Heart left ventricle (tissue), 16 donors: ENCODE measurements at regions of chr1 and their contacts with region 1.

Region 1: GRCh38 chr1:154870115-154870571 is at the start of gene KCNN3:
- DNase-seq: peak; percentile 92 to 95 (median 94)
- ATAC-seq: peak; percentile 97 to 99 (median 98)
- H3K4me3 ChIP-seq: peak within 1 kb of the TSS; percentile 27 to 73 (median 57)
- H3K27ac ChIP-seq: peak within 1 kb of the TSS in 8 of 12 donors; percentile 27 to 65 (median 42)
- H3K4me1 ChIP-seq: peaks cover 0 to 47% (median 32%) of the 10 kb centered on the region in 12 donors
- H3K27me3 ChIP-seq: peaks cover 0 to 11% (median 0%) of the 10 kb centered on the region in 9 donors
- CTCF ChIP-seq: peak in 1 of 12 donors; percentile 5
- POLR2A ChIP-seq: peak in 1 of 2 donors; percentile 88
- total RNA-seq, gene KCNN3: 1.0 to 4.6 (median 3.0) TPM

Region 2: GRCh38 chr1:154760469-154760933 is 109.6 kb before region 1 on chr1:
- intact Hi-C with region 1: loop called in 5 of 10 experiments (anchors 5 kb)
- DNase-seq: peak; percentile 43 to 88 (median 58)
- ATAC-seq: peak in 3 of 4 donors; percentile 82 to 92 (median 91)
- H3K4me3 ChIP-seq: peak overlapping the region; percentile 13 to 58 (median 44)
- H3K27ac ChIP-seq: peak overlapping the region in 1 of 12 donors; percentile 57
- H3K4me1 ChIP-seq: peaks cover 0 to 29% (median 17%) of the 10 kb centered on the region in 12 donors
- H3K27me3 ChIP-seq: peaks cover 0 to 33% (median 0%) of the 10 kb centered on the region in 9 donors
- CTCF ChIP-seq: peak; percentile 66 to 83 (median 74)
- POLR2A ChIP-seq: no peak

Region 3: DNA sequence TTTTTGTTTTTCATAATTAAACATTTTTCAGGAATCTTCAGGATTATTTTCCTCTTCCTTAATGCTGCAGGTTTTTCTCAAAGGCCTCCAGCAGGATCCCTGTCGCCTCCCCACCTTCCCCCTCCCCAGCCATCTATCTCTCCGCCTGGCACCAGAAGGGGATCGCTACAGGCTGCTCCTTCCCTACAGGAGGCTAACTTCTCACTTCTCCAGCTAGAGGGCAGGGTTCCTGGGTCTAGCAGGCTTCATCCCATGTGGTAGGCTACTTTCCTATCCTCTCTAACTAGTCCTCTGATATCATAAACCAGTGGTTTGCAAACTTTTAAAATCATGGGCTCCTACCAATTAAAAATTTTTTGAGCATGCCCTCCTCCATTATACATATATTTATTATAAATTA is 104.2 kb before region 1 on chr1:
- intact Hi-C with region 1: loop called in 7 of 10 experiments (anchors 5 to 10 kb)
- DNase-seq: no peak
- ATAC-seq: peak in 3 of 4 donors; percentile 36 to 64 (median 54)
- H3K4me3 ChIP-seq: no peak overlapping the region
- H3K27ac ChIP-seq: no peak overlapping the region
- H3K4me1 ChIP-seq: peaks cover 0 to 23% (median 15%) of the 10 kb centered on the region in 12 donors
- H3K27me3 ChIP-seq: peaks cover 0 to 17% (median 0%) of the 10 kb centered on the region in 9 donors
- CTCF ChIP-seq: peak in 9 of 12 donors; percentile 12 to 44 (median 26)
- POLR2A ChIP-seq: no peak

Region 4: GRCh38 chr1:154772606-154773506 is 97.3 kb before region 1 on chr1:
- intact Hi-C with region 1: loop called in 6 of 10 experiments (anchors 5 to 10 kb)
- DNase-seq: no peak
- ATAC-seq: no peak
- H3K4me3 ChIP-seq: no peak overlapping the region
- H3K27ac ChIP-seq: no peak overlapping the region
- H3K4me1 ChIP-seq: peaks cover 0 to 13% (median 5%) of the 10 kb centered on the region in 12 donors
- H3K27me3 ChIP-seq: no peaks in the 10 kb centered on the region
- CTCF ChIP-seq: peak in 6 of 12 donors; percentile 5 to 17 (median 6)
- POLR2A ChIP-seq: no peak

Region 5: DNA sequence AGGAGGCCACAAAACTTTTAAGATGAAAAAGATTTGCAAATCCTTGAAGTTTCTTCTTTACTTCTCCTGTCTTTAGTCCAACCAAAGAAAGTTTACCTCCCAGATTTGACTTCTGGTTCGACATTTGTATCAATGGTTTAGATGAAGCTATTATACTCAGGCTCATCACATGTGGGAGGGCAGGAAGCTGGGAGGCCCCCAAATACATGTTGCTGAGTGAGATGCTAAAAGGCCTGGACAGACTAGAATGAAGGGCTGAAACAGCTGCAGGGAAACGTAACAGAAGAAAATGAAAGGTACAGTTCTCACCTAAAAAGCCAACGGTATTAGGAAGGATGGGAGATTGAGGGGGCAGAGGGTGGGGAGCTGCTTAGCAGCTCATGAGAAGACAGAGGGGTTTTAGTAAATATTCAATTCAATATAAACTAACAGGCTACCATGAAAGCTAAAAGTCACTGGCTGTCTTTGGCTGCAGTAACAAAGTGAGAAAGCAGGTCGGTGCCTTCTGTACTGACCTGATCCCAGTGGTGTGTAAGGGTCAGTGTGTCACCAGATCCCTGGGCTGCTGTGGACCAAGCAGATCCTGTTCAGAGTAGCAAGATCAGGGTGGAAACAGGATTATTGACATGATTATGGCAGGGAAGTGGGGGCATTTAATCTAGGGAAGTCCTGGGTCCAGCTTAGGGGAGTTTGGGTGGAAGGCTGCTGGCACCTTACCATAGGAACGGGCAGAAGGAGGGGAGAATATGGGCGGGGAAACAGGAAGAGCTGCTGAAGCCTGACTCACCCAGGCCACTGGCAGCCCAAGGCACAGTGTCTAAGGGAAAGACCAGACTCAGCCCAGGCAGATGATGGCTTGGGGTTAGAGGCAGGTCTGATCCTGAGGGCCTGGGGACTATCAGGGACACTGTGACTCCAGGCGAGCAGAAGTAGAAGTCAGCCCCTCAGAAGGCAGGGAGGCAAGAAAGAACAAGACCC is 60.4 kb before region 1 on chr1:
- intact Hi-C with region 1: loop called in 3 of 10 experiments (anchors 1 to 5 kb)
- DNase-seq: peak in 1 of 5 donors; percentile 55
- ATAC-seq: peak in 3 of 4 donors; percentile 53 to 60 (median 58)
- H3K4me3 ChIP-seq: no peak overlapping the region
- H3K27ac ChIP-seq: peak overlapping the region in 10 of 12 donors; percentile 41 to 80 (median 67)
- H3K4me1 ChIP-seq: peaks cover 0 to 69% (median 32%) of the 10 kb centered on the region in 12 donors
- H3K27me3 ChIP-seq: peaks cover 0 to 4% (median 0%) of the 10 kb centered on the region in 9 donors
- CTCF ChIP-seq: no peak
- POLR2A ChIP-seq: no peak

Region 6: GRCh38 chr1:154849645-154850131 is 20.5 kb before region 1 on chr1:
- intact Hi-C with region 1: no loop called
- DNase-seq: no peak
- ATAC-seq: no peak
- H3K4me3 ChIP-seq: no peak overlapping the region
- H3K27ac ChIP-seq: no peak overlapping the region
- H3K4me1 ChIP-seq: peaks cover 0 to 34% (median 24%) of the 10 kb centered on the region in 12 donors
- H3K27me3 ChIP-seq: no peaks in the 10 kb centered on the region
- CTCF ChIP-seq: no peak
- POLR2A ChIP-seq: no peak

Region 7: DNA sequence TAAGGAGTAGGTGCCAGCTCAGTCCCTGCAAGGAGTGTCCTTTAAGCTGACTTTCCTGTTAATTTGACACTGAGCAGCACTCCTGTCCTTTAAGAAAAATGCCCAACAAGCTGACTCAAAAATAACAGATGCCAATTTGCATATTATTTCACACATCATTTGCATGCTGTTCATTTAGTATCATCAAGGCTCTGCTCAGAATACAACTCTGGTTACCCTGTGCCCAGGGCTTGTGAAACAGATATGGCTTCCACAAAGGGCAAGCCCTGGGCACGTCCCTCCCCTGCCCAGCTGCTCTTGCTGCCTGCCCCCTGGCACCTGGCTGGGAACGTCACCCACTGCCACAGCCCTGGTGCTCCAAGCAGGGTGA is 10.4 kb before region 1 on chr1:
- intact Hi-C with region 1: no loop called
- DNase-seq: no peak
- ATAC-seq: peak in 2 of 4 donors; percentile 31 to 36
- H3K4me3 ChIP-seq: no peak overlapping the region
- H3K27ac ChIP-seq: peak overlapping the region in 1 of 12 donors; percentile 4
- H3K4me1 ChIP-seq: peaks cover 0 to 31% (median 10%) of the 10 kb centered on the region in 12 donors
- H3K27me3 ChIP-seq: no peaks in the 10 kb centered on the region
- CTCF ChIP-seq: no peak
- POLR2A ChIP-seq: no peak